ENCODE measurements at regions of chr18 and their contacts with region 1.

Region 1: GRCh38 chr18:37701967-37702366 is 136.4 kb upstream of the CELF4 start:
- DNase-seq: peak in 1 of 5 donors; percentile 46
- ATAC-seq: peak in 1 of 4 donors; percentile 39
- H3K4me3 ChIP-seq: no peak overlapping the region
- H3K27ac ChIP-seq: no peak overlapping the region
- H3K4me1 ChIP-seq: no peaks in the 10 kb centered on the region
- H3K27me3 ChIP-seq: peaks cover 0 to 5% (median 0%) of the 10 kb centered on the region in 9 donors
- CTCF ChIP-seq: no peak
- POLR2A ChIP-seq: no peak

Region 2: DNA sequence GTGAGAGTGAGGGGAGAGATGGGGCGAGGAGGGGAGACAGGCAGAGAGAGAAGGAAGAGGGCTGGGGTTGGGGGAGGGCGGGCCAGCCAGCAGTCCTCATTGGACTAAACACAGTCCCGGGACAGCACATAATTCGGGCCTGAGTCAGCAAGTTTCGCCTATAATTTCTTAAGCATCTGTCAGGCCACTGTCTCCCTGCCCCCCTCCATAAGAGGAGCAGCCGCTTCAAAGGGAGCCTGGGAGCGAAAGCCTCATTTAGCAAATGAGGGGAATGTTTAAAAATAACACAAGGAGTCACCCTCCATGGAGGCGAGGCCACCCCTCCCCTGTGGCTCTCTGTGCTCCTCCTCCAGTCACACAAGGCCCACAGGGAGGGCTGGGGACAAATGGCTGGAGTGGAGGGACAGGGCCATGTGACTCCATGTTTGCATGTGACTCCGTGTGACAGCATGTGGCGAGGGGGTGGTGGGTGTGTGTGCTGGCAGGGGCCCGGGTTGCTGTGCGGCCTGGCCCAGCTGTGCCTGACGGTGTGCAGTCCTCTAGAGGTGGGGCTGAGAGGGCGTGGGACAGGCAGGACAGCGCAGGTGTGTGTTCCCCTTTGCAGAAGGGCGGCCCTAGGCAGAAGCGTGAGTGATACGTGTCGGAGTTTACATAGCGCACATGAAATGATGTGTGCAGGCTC is 298.7 kb before region 1 on chr18:
- intact Hi-C with region 1: no loop called
- DNase-seq: peak in 4 of 5 donors; percentile 61 to 81 (median 64)
- ATAC-seq: peak; percentile 86 to 95 (median 91)
- H3K4me3 ChIP-seq: no peak overlapping the region
- H3K27ac ChIP-seq: peak overlapping the region in 6 of 12 donors; percentile 6 to 62 (median 40)
- H3K4me1 ChIP-seq: peaks cover 0 to 13% (median 4%) of the 10 kb centered on the region in 12 donors
- H3K27me3 ChIP-seq: no peaks in the 10 kb centered on the region
- CTCF ChIP-seq: no peak
- POLR2A ChIP-seq: no peak

Region 3: DNA sequence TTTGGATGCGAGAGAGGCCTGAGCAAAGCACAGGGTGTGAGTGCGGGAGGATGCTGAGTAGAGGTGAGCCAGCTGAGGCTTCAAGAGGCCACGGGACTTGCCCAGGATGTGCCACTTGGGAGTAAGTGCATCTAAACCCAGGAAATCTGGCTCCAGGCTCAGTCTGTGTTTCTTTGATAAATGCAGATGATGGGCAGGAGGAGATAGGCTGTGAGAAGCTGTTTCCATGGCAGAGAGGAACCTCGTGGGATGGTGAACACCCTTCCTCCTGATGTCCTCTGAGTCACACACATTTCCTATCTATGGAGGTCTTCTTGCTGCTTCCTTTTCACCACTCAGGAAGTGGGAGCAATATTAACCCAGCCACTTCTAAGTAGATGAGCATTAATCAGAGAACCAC is 97.9 kb before region 1 on chr18:
- intact Hi-C with region 1: no loop called
- DNase-seq: no peak
- ATAC-seq: peak in 3 of 4 donors; percentile 33 to 65 (median 54)
- H3K4me3 ChIP-seq: no peak overlapping the region
- H3K27ac ChIP-seq: no peak overlapping the region
- H3K4me1 ChIP-seq: no peaks in the 10 kb centered on the region
- H3K27me3 ChIP-seq: no peaks in the 10 kb centered on the region
- CTCF ChIP-seq: no peak
- POLR2A ChIP-seq: no peak

Region 4: GRCh38 chr18:37754141-37754540 is 52.2 kb after region 1 on chr18:
- intact Hi-C with region 1: loop called in 1 of 10 experiments (anchors 10 kb)
- DNase-seq: no peak
- ATAC-seq: no peak
- H3K4me3 ChIP-seq: no peak overlapping the region
- H3K27ac ChIP-seq: no peak overlapping the region
- H3K4me1 ChIP-seq: no peaks in the 10 kb centered on the region
- H3K27me3 ChIP-seq: peaks cover 0 to 7% (median 0%) of the 10 kb centered on the region in 9 donors
- CTCF ChIP-seq: no peak
- POLR2A ChIP-seq: no peak

Region 5: GRCh38 chr18:37762076-37762621 is 60.2 kb after region 1 on chr18:
- intact Hi-C with region 1: loop called in 2 of 10 experiments (anchors 10 kb)
- DNase-seq: no peak
- ATAC-seq: no peak
- H3K4me3 ChIP-seq: no peak overlapping the region
- H3K27ac ChIP-seq: no peak overlapping the region
- H3K4me1 ChIP-seq: no peaks in the 10 kb centered on the region
- H3K27me3 ChIP-seq: no peaks in the 10 kb centered on the region
- CTCF ChIP-seq: no peak
- POLR2A ChIP-seq: no peak

Region 6: DNA sequence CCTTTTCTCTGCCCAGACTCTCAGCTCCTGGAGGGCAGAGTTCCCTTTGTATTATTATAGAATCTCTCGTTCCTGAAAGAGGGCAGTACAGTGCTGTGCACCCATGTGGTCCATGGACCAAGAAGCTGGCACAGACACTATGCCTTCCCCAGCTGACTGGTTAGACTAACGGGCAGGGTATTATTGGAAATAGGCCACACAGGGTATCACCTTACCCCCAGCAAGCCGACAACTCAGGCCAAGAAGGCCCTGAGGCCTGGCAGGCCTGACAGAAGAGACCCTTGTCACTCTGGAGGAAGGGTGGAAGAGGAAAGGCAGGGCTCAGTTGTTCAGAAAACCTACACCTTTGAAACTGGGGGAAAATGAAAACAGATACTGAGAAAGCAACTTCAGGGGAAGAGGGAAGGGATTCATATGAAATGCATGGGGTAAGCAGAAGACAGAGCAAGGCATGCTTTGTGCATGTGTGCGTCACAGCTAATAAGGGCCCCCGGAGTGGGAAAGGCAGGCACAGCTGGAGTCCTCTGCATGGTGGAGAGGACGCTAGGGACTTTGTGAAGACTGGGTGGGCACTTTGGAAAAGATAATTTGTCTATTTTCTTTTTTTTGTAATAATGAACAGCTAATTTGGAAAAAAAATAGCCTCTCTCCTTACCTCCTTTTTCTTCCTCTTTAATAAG is 340.4 kb after region 1 on chr18:
- intact Hi-C with region 1: no loop called
- DNase-seq: no peak
- ATAC-seq: no peak
- H3K4me3 ChIP-seq: no peak overlapping the region
- H3K27ac ChIP-seq: no peak overlapping the region
- H3K4me1 ChIP-seq: no peaks in the 10 kb centered on the region
- H3K27me3 ChIP-seq: peaks cover 0 to 11% (median 0%) of the 10 kb centered on the region in 9 donors
- CTCF ChIP-seq: no peak
- POLR2A ChIP-seq: no peak